Activated naive CD4-positive, alpha-beta T cell treated with anti-CD3 and anti-CD28 coated beads, Interleukin-2, amount 10 ng/mL, durations not matched to agents 7 days and 5 days (primary cell): ENCODE measurements at regions of chr16 and their contacts with region 1.

Region 1: GRCh38 chr16:69166221-69166833 is 20.6 kb upstream of the SNTB2 start:
- DNase-seq: peak; percentile 69
- H3K4me3 Mint-ChIP-seq: no peak overlapping the region
- H3K27ac Mint-ChIP-seq: peak overlapping the region; percentile 82
- H3K4me1 Mint-ChIP-seq: peaks cover 27% of the 10 kb centered on the region
- H3K27me3 Mint-ChIP-seq: no peaks in the 10 kb centered on the region

Region 2: GRCh38 chr16:69150146-69150865 is 16.0 kb before region 1 on chr16:
- CTCF ChIA-PET with region 1: interaction called, 13 read pairs
- DNase-seq: peak; percentile 70
- H3K4me3 Mint-ChIP-seq: no peak overlapping the region
- H3K27ac Mint-ChIP-seq: no peak overlapping the region
- H3K4me1 Mint-ChIP-seq: no peaks in the 10 kb centered on the region
- H3K27me3 Mint-ChIP-seq: no peaks in the 10 kb centered on the region

Region 3: GRCh38 chr16:69204172-69204571 is 37.8 kb after region 1 on chr16:
- CTCF ChIA-PET with region 1: no interaction called
- DNase-seq: no peak
- H3K4me3 Mint-ChIP-seq: no peak overlapping the region
- H3K27ac Mint-ChIP-seq: peak overlapping the region; percentile 62
- H3K4me1 Mint-ChIP-seq: peaks cover 12% of the 10 kb centered on the region
- H3K27me3 Mint-ChIP-seq: no peaks in the 10 kb centered on the region

Region 4: GRCh38 chr16:69223882-69224281 is 57.6 kb after region 1 on chr16:
- CTCF ChIA-PET with region 1: no interaction called
- DNase-seq: no peak
- H3K4me3 Mint-ChIP-seq: no peak overlapping the region
- H3K27ac Mint-ChIP-seq: no peak overlapping the region
- H3K4me1 Mint-ChIP-seq: no peaks in the 10 kb centered on the region
- H3K27me3 Mint-ChIP-seq: no peaks in the 10 kb centered on the region

Region 5: DNA sequence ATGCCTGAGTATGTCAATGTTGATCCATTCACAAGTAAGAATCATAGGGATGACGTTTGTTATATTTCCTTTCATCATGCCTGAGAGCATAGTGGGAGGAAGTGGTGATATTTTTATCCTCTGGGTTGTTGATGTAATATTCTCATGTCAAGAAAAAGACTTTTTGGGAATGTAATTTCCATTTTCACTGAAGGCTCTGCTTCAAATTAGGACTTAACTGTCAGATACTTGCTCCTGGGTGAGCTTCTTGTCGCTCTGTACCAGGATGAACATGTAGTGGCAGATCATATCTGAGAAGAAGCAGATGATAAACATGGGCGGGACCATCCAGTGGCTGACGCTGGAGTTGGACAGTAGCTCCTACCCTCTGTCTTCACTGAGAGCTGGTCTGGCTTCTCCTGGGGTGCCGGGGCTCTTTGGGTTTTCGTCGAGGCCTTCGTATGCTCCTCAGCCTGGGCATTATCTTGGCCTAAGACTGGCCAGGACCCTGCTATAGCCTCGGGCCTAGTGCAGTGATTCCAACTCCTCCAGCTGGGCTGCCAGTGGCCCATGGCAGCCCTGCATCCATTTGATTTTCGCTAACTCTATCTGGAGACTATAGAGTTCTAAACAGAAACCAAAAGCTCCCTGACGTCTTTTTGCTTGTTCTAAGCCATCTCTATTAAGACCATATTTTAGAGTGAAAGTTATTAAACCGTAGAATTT is 277.8 kb after region 1 on chr16:
- CTCF ChIA-PET with region 1: no interaction called
- DNase-seq: peak; percentile 53
- H3K4me3 Mint-ChIP-seq: peak overlapping the region; percentile 78
- H3K27ac Mint-ChIP-seq: peak overlapping the region; percentile 100
- H3K4me1 Mint-ChIP-seq: peaks cover 36% of the 10 kb centered on the region
- H3K27me3 Mint-ChIP-seq: no peaks in the 10 kb centered on the region